Activated CD8-positive, alpha-beta memory T cell treated with anti-CD3 and anti-CD28 coated beads, Interleukin-2, amount 10 ng/mL, durations not matched to agents 7 days and 5 days (primary cell): ENCODE measurements at regions of chr17 and their contacts with region 1.

Region 1: DNA sequence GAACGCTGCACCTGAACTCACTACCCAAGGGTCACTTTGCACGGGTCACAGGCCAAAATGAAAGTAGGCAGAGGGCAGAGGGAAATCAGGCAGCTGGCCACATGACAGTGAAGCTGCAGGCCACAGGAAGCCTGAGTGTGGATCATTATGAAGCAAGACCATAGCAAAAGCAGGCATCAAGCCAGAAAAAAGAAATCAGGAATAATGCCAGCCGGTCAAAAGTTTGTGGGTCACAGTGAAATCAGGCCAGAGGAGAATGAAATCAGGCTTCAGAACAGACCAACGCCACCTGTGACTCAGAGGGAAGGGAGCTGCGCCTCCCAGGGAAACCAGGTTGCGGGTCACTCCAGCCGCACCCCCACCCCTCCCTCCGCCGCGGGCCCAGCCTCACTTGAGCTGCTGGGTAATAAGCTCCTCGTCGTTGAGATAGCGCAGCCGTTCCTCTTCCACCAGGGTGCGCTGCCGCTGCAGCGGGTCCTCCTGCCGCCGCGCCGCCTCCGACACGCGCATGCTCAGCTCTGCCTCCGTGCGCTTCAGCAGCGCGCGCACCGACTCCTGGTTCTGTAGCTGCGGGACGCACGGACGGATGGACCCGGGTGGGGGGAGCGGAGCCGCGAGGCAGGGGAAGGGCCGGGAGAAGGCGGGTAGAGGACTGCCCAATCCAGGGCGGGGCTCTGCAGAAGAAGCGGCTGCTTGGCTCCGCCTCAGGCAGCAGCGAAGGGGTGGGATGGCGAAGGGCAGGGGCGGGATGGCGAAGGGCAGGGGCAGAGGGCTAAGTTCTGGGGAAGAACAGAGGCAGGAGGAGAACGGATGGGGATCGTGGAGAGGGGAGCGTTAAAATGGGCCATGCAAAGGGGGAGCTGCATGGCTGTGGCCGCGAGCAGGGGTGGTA is 47.7 kb downstream of the SRCIN1 start:
- DNase-seq: peak; percentile 92
- ATAC-seq: peak; percentile 85
- H3K4me3 Mint-ChIP-seq: peak overlapping the region; percentile 78
- H3K27ac Mint-ChIP-seq: no peak overlapping the region
- H3K4me1 Mint-ChIP-seq: peaks cover 24% of the 10 kb centered on the region
- H3K27me3 Mint-ChIP-seq: peaks cover 63% of the 10 kb centered on the region

Region 2: GRCh38 chr17:38464723-38465390 is 93.2 kb before region 1 on chr17:
- CTCF ChIA-PET with region 1: no interaction called
- DNase-seq: no peak
- ATAC-seq: no peak
- H3K4me3 Mint-ChIP-seq: no peak overlapping the region
- H3K27ac Mint-ChIP-seq: no peak overlapping the region
- H3K4me1 Mint-ChIP-seq: no peaks in the 10 kb centered on the region
- H3K27me3 Mint-ChIP-seq: no peaks in the 10 kb centered on the region

Region 3: DNA sequence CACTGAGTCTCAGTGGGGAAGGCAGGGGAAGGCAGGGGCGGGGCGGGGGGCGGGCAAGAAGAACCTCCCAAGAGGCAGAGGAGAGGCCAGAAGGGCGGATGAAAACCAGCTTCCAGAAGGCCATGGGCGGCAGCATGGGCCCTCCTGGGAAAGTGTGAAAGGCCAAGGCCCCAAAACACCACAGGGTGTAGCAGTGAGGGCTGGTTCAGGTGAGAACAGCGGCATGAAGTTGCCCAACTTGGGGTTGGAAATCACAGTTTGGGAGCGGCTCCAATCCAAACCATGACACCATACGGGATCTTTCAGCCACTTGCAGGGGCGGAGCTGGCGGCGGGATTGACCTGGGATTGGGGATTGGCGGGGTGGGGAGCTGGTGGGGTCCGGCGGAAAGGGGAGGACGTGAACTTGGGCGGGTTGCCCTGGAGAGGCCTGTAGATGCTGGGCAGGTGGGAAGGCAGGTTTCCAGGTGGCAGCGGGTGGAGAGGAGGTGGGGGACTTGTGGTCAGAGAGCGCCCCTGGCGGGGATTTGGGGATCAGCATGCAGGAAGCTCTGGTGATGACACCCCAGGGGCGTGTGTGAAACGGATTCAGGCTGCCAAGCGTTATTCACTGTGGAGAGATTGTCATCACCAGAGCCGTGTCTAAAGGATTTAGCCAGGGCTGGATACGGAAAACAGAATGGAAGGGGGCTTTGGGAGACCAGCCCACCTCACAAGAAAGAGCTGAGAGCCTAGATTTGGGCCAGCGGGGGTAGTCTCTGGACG is 48.9 kb before region 1 on chr17:
- CTCF ChIA-PET with region 1: interaction called, 15 read pairs
- DNase-seq: peak; percentile 80
- ATAC-seq: peak; percentile 87
- H3K4me3 Mint-ChIP-seq: no peak overlapping the region
- H3K27ac Mint-ChIP-seq: no peak overlapping the region
- H3K4me1 Mint-ChIP-seq: peaks cover 4% of the 10 kb centered on the region
- H3K27me3 Mint-ChIP-seq: peaks cover 41% of the 10 kb centered on the region

Region 4: GRCh38 chr17:38578229-38579082 is 20.4 kb after region 1 on chr17:
- CTCF ChIA-PET with region 1: interaction called, 184 read pairs
- DNase-seq: no peak
- ATAC-seq: no peak
- H3K4me3 Mint-ChIP-seq: no peak overlapping the region
- H3K27ac Mint-ChIP-seq: no peak overlapping the region
- H3K4me1 Mint-ChIP-seq: no peaks in the 10 kb centered on the region
- H3K27me3 Mint-ChIP-seq: peaks cover 84% of the 10 kb centered on the region

Region 5: GRCh38 chr17:38605888-38606645 is 48.0 kb after region 1 on chr17 and contains the start of gene SRCIN1:
- CTCF ChIA-PET with region 1: interaction called, 90 read pairs
- DNase-seq: peak; percentile 61
- ATAC-seq: peak; percentile 56
- H3K4me3 Mint-ChIP-seq: peak within 1 kb of the TSS; percentile 56
- H3K27ac Mint-ChIP-seq: no peak within 1 kb of the TSS
- H3K4me1 Mint-ChIP-seq: peaks cover 14% of the 10 kb centered on the region
- H3K27me3 Mint-ChIP-seq: peaks cover 76% of the 10 kb centered on the region
- total RNA-seq, gene SRCIN1: 0.26 to 0.30 TPM

Region 6: GRCh38 chr17:38667099-38667786 is 109.2 kb after region 1 on chr17:
- CTCF ChIA-PET with region 1: interaction called, 365 read pairs
- DNase-seq: peak; percentile 77
- ATAC-seq: peak; percentile 76
- H3K4me3 Mint-ChIP-seq: no peak overlapping the region
- H3K27ac Mint-ChIP-seq: no peak overlapping the region
- H3K4me1 Mint-ChIP-seq: peaks cover 5% of the 10 kb centered on the region
- H3K27me3 Mint-ChIP-seq: peaks cover 61% of the 10 kb centered on the region

Region 7: GRCh38 chr17:38702166-38702899 is 144.3 kb after region 1 on chr17:
- CTCF ChIA-PET with region 1: no interaction called
- DNase-seq: peak; percentile 89
- ATAC-seq: peak; percentile 54
- H3K4me3 Mint-ChIP-seq: peak overlapping the region; percentile 90
- H3K27ac Mint-ChIP-seq: peak overlapping the region; percentile 99
- H3K4me1 Mint-ChIP-seq: peaks cover 40% of the 10 kb centered on the region
- H3K27me3 Mint-ChIP-seq: no peaks in the 10 kb centered on the region

Region 8: DNA sequence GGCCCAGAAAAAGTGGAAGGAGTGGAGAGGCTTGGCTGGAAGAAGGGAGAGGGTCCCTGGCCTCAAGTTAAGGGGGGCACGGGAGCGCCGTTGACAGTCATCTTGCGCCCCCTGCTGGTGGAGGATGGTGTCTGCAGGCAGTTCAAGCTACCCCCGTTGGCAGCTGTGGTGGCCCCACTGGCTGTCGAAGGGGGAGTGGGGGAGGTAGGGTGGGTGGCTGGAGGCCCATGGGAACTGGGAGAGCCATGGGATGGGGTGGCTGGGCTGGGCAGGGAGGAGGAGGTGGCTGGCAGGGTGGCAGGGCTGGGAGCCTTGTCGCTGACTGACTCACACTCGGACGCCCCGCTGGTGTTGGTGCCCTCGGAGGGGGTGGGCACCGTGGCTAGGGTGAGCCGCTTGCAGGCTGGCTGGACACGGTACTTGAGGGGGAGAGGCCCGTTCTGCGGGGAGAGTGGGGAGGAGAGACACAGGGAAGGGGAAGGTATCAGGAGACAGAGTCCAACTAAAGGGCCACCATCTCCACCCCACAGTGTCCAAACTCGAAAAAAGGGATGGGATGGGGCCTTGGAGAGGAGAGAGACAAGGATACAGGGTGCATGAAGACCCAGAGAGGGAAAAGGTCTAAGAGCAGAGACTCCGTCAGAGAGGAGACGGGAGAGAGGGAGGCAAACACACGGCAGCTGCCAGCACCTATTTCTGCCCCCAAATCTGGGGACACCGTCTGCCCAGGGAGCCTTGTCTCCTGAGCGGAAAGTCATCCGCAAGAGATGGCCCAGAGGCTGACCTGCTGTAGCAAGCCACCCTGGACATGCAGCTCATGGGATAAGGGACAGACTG is 177.3 kb after region 1 on chr17:
- CTCF ChIA-PET with region 1: interaction called, 30 read pairs
- DNase-seq: peak; percentile 77
- ATAC-seq: peak; percentile 18
- H3K4me3 Mint-ChIP-seq: no peak overlapping the region
- H3K27ac Mint-ChIP-seq: no peak overlapping the region
- H3K4me1 Mint-ChIP-seq: peaks cover 39% of the 10 kb centered on the region
- H3K27me3 Mint-ChIP-seq: no peaks in the 10 kb centered on the region

Region 9: GRCh38 chr17:38815576-38816193 is 257.6 kb after region 1 on chr17:
- CTCF ChIA-PET with region 1: no interaction called
- DNase-seq: peak; percentile 69
- ATAC-seq: peak; percentile 74
- H3K4me3 Mint-ChIP-seq: no peak overlapping the region
- H3K27ac Mint-ChIP-seq: peak overlapping the region; percentile 71
- H3K4me1 Mint-ChIP-seq: peaks cover 16% of the 10 kb centered on the region
- H3K27me3 Mint-ChIP-seq: no peaks in the 10 kb centered on the region